ENCODE measurements at regions of chrX and their contacts with region 1.

Region 1: DNA sequence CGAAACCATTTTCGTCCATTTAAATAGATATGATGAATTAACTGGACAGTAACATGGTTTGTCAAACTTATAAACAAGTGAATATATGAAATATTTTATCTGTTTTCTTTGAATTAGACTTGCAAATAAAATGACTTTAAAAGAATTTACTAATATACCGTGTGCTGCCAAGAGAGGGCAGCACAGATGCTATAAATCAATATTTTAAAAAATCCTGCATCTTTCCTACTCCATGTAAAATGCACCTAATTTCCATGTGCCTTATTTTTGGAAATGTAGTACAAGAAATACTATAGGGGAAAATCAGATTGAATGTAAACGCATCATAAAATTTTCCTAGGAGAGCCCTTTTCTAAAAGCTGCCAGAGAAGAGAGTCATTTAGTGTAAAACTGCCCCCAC is 62.2 kb downstream of the PRKX start:
- DNase-seq: no peak
- ATAC-seq: no peak
- H3K4me3 Mint-ChIP-seq: no peak overlapping the region
- H3K27ac Mint-ChIP-seq: no peak overlapping the region
- H3K4me1 Mint-ChIP-seq: peaks cover 2% of the 10 kb centered on the region
- H3K27me3 Mint-ChIP-seq: no peaks in the 10 kb centered on the region

Region 2: DNA sequence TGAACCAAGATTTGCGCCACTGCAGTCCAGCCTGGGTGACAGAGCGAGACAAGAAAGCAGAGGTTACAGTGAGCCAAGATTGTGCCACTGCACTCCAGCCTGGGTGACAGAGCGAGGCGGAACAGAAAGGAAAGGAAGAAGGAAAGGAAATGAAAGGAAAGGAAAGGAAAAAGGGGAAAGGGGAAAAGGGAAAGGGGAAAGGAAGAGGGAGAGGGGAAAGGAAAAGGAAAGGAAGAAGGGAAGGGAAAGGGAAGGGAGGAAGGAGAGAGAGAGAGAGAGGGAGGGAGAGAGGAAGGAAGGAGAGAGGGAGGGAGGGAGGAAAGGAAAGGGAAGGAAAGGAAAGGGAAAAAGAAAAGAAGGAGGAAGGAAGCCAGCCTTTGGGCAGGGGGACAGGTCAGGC is 14.5 kb before region 1 on chrX:
- CTCF ChIA-PET with region 1: no interaction called
- POLR2A ChIA-PET with region 1: no interaction called
- DNase-seq: no peak
- ATAC-seq: no peak
- H3K4me3 Mint-ChIP-seq: no peak overlapping the region
- H3K27ac Mint-ChIP-seq: no peak overlapping the region
- H3K4me1 Mint-ChIP-seq: no peaks in the 10 kb centered on the region
- H3K27me3 Mint-ChIP-seq: no peaks in the 10 kb centered on the region

Region 3: DNA sequence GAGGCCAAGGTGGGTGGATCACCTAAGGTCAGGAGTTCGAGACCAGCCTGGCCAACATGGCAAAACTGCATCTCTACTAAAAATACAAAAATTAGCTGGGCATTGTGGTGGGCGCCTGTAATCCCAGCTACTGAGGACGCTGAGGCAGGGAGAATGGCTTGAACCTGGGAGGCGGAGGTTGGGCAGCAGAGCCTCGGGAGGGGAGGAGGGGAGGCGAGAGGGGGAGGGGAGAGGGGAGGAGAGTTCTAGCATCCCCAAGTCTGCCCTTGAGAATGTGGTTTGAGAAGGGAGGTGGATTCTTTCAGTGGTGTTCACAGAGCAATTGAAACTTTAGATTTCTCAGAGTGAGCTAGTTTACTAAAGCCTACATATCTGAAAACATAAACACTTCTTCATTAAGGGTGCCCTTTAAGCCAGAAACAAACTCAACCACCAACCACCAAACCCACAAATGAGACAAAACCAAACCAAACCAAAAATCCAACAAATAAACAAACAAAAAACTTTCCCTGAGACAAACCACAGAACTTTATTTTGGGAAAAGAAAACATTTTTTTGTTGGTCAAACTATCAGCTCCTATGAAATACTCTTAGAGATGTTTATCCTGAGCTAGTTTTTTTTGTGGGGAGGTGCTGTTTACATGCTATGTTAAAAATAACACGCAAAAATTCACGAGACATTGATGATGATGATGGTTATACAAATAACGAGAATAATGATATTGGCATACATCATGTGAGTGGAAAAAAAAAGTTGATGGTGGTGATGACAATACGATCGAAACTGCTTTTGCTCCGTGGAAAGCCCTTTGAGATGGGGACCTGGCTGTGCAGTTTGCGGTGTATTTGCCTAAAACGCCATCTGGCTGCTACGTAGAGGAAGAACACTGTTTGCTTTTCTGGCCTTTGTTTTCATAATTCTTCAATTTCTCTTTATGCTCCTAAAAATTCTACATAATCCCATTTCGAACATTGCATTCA is 160.3 kb after region 1 on chrX:
- CTCF ChIA-PET with region 1: interaction called, 27 read pairs
- POLR2A ChIA-PET with region 1: no interaction called
- DNase-seq: peak; percentile 66
- ATAC-seq: no peak
- H3K4me3 Mint-ChIP-seq: peak overlapping the region; percentile 46
- H3K27ac Mint-ChIP-seq: peak overlapping the region; percentile 69
- H3K4me1 Mint-ChIP-seq: peaks cover 26% of the 10 kb centered on the region
- H3K27me3 Mint-ChIP-seq: peaks cover 25% of the 10 kb centered on the region